Esophagus muscularis mucosa (tissue), 4 donors: ENCODE measurements at regions of chr15 and their contacts with region 1.

Region 1: DNA sequence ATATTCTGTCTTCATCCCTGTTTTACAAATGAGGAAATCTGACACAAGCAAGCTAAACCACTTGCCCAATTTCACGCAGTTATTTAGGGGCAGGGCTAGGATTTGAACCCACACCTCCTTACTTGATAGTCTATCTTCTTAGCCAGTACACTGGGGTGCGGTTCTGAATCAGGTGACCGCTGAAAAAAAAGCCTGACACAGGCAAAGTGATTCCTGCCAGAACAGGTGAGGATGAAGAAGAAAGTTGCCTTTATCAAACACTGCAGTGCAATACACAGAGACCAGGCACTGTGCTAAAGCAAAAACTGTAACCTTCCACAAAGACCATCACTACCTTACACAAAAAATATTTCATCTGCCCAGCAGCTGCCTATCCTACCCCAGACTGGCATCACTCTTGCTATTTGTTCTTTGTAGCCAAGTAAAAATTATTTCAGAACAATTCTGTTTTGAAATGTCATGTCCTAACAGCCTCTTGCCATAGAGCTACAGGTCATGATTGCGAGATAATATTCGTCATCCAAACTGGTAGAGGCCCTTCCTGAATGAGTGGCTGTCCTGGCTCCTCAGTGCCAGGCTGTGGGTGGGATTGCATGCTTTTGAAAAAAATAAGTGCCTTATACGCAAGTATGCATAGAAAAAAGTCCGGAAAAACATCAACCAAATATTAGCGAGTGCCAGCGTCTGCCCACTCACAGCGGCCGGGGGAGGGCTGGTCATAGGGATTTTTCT is 142.3 kb upstream of the TPM1 start:
- DNase-seq: no peak
- H3K4me3 ChIP-seq: no peak overlapping the region
- H3K27ac ChIP-seq: peak overlapping the region; percentile 91 to 95 (median 93)
- H3K4me1 ChIP-seq: peaks cover 54 to 99% (median 90%) of the 10 kb centered on the region in 4 donors
- H3K27me3 ChIP-seq: no peaks in the 10 kb centered on the region
- CTCF ChIP-seq: no peak
- EP300 ChIP-seq: peak; percentile 54
- POLR2A ChIP-seq: no peak

Region 2: GRCh38 chr15:62799919-62800318 is 100.3 kb before region 1 on chr15:
- intact Hi-C with region 1: no loop called
- DNase-seq: no peak
- H3K4me3 ChIP-seq: no peak overlapping the region
- H3K27ac ChIP-seq: peak overlapping the region in 1 of 4 donors; percentile 2
- H3K4me1 ChIP-seq: peaks cover 4 to 16% (median 6%) of the 10 kb centered on the region in 4 donors
- H3K27me3 ChIP-seq: no peaks in the 10 kb centered on the region
- CTCF ChIP-seq: no peak
- EP300 ChIP-seq: no peak
- POLR2A ChIP-seq: no peak

Region 3: GRCh38 chr15:62862717-62863116 is 37.5 kb before region 1 on chr15:
- intact Hi-C with region 1: loop called (anchors 5 kb)
- DNase-seq: no peak
- H3K4me3 ChIP-seq: no peak overlapping the region
- H3K27ac ChIP-seq: peak overlapping the region in 2 of 4 donors; percentile 17 to 77
- H3K4me1 ChIP-seq: peaks cover 0 to 35% (median 24%) of the 10 kb centered on the region in 4 donors
- H3K27me3 ChIP-seq: no peaks in the 10 kb centered on the region
- CTCF ChIP-seq: no peak
- EP300 ChIP-seq: no peak
- POLR2A ChIP-seq: no peak

Region 4: DNA sequence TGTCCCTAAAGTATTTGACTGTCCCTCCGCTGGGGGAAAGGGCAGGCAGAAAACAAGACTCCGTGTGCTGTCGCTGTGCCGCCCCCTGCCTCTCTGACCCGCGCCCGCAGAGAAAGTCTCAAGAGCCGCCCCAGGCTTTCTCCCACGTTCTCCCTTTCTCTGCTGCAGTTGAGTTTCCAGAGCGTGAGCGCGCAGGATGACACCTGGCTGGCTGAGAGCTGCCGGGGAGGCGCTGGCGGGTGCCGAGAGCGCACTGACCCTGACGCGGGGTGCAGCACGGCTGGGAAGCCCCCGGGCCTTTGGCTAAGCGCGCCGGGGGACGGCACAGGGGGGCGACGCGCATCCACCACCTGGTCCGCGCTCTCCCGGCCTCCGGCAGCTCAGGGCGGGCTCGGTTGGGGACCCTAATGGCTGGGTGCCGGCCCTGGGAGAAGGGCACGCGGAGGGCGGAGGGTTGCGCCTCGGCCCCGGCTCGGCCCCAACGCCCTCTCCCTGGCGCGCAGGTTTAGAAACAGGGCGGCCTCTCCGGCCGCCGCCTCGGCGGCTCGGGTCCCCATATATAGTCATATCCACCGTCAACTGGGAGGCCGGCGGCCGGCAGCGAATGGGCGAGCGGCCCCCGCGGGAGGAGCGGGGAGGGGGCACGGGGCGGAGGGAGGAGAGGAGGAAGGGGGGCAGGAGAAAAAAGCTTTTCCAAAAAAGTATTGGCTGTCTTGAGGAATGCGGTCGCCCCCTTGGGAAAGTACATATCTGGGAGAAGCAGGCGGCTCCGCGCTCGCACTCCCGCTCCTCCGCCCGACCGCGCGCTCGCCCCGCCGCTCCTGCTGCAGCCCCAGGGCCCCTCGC is 142.0 kb after region 1 on chr15 and contains the start of gene TPM1:
- intact Hi-C with region 1: loop called (anchors 2 kb)
- DNase-seq: peak; percentile 97
- H3K4me3 ChIP-seq: peak within 1 kb of the TSS; percentile 70 to 91 (median 82)
- H3K27ac ChIP-seq: peak within 1 kb of the TSS; percentile 94 to 97 (median 96)
- H3K4me1 ChIP-seq: peaks cover 5 to 38% (median 20%) of the 10 kb centered on the region in 4 donors
- H3K27me3 ChIP-seq: peaks cover 0 to 10% (median 4%) of the 10 kb centered on the region in 4 donors
- CTCF ChIP-seq: peak in 2 of 3 experiments; percentile 18 to 44
- EP300 ChIP-seq: no peak
- POLR2A ChIP-seq: peak; percentile 73
- total RNA-seq, gene TPM1: 5,599 to 7,718 (median 6,496) TPM